CD14-positive monocyte (primary cell): ENCODE measurements at regions of chr4 and their contacts with region 1.

Region 1: GRCh38 chr4:2462218-2462991 is 6.5 kb upstream of the RNF4 start:
- DNase-seq: peak; percentile 39 to 61 (median 58)
- H3K4me3 ChIP-seq: peak overlapping the region in 2 of 3 experiments; percentile 6 to 71
- H3K4me3 Mint-ChIP-seq: peak overlapping the region; percentile 69 to 90
- H3K27ac ChIP-seq: no peak overlapping the region
- H3K27ac Mint-ChIP-seq: no peak overlapping the region
- H3K4me1 ChIP-seq: peaks cover 8 to 16% of the 10 kb centered on the region in 2 donors
- H3K4me1 Mint-ChIP-seq: peaks cover 17% of the 10 kb centered on the region
- H3K27me3 ChIP-seq: peaks cover 11 to 26% of the 10 kb centered on the region in 2 donors
- H3K27me3 Mint-ChIP-seq: peaks cover 36 to 45% (median 42%) of the 10 kb centered on the region in 3 donors
- CTCF ChIP-seq: peak; percentile 61

Region 2: DNA sequence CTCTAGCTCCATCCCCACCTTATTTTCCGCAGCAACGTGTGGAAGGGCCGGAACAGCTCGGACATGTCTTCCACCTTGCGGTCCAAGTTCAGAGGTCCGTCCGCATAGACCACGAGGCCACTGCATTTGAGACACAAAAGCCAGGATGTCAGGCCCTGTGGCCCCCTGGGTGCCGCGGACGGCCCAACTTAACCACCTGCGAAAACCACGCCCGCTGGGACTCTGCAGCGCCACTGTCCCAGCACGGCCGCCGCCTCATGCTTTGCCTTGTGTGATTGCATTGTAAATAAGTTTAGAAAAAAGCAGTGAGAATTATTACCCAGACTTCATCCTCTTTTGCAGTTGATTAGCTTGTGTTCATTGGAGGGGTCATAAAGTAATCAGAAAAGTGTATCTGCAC is 142.3 kb before region 1 on chr4:
- intact Hi-C with region 1: no loop called
- DNase-seq: no peak
- H3K4me3 ChIP-seq: no peak overlapping the region
- H3K4me3 Mint-ChIP-seq: no peak overlapping the region
- H3K27ac ChIP-seq: no peak overlapping the region
- H3K27ac Mint-ChIP-seq: no peak overlapping the region
- H3K4me1 ChIP-seq: no peaks in the 10 kb centered on the region
- H3K4me1 Mint-ChIP-seq: no peaks in the 10 kb centered on the region
- H3K27me3 ChIP-seq: no peaks in the 10 kb centered on the region
- H3K27me3 Mint-ChIP-seq: peaks cover 3 to 4% (median 3%) of the 10 kb centered on the region in 3 donors
- CTCF ChIP-seq: no peak

Region 3: DNA sequence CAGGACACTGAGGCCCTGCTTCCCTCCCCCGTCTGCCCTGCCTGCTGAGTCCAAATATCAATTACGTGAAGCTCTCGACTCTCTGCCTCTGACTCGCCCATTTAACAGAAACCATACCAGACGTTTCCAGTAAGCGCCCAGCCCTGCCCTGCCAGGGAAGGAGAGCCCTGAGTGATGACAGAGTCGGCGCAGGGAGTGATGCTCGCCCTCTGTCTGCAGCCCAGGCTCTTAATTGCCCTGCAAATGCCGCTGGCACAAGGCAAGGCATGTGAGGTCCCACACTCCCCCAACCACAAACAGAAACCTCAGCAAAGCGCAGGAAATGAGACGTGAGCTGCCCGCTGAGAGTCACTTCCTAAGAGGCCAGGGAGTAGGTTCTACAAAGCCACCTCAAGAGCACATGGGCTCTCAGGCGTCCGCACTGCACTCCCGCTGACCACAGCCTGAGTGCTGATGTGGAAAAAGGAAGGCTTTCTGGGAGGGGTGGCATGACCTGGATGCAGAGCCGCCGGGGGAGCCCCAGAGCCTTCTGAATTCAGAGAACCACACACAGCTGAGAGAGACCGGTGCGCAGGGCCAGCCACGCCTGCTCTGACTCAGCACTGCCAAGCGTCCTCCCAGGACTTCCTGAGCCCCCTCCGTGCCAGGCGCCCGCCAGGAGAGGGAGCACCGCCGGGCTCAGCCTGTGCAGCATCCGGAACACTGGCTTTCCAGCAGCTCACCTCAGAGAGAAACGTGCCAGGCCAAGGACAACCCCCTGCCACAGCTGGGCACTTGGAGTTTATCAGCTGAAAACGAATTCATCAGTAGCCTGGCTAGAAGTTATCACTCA is 49.3 kb before region 1 on chr4:
- intact Hi-C with region 1: no loop called
- DNase-seq: peak; percentile 94 to 98 (median 95)
- H3K4me3 ChIP-seq: peak overlapping the region; percentile 7 to 72 (median 24)
- H3K4me3 Mint-ChIP-seq: peak overlapping the region; percentile 75 to 89
- H3K27ac ChIP-seq: peak overlapping the region; percentile 66 to 87
- H3K27ac Mint-ChIP-seq: peak overlapping the region; percentile 91 to 98 (median 97)
- H3K4me1 ChIP-seq: peaks cover 46 to 53% of the 10 kb centered on the region in 2 donors
- H3K4me1 Mint-ChIP-seq: peaks cover 50% of the 10 kb centered on the region
- H3K27me3 ChIP-seq: peaks cover 16 to 29% of the 10 kb centered on the region in 2 donors
- H3K27me3 Mint-ChIP-seq: peaks cover 28 to 38% (median 34%) of the 10 kb centered on the region in 3 donors
- CTCF ChIP-seq: peak; percentile 53

Region 4: DNA sequence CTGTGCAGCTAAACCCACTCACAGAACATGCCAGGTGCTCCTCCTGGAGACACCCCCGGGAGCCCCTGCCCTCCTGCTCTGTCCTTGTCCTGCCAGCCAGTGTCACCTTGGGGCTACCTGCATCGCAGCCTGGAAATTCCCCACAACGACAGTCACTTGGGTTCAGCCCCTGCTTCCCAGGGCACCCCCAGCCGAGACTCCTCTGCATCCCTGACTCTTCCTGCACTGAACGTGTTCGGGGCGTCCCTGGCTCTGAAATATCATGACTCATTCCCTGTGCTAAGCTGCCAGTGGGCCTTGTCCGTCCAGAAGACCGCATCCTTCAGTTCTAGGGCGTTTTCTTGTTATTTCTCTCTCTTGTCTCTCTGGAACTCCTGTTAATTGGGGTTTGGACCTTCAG is 37.8 kb before region 1 on chr4:
- intact Hi-C with region 1: loop called in 1 of 2 experiments (anchors 5 kb)
- DNase-seq: no peak
- H3K4me3 ChIP-seq: no peak overlapping the region
- H3K4me3 Mint-ChIP-seq: no peak overlapping the region
- H3K27ac ChIP-seq: no peak overlapping the region
- H3K27ac Mint-ChIP-seq: no peak overlapping the region
- H3K4me1 ChIP-seq: peaks cover 8 to 9% of the 10 kb centered on the region in 2 donors
- H3K4me1 Mint-ChIP-seq: peaks cover 13% of the 10 kb centered on the region
- H3K27me3 ChIP-seq: peaks cover 0 to 7% of the 10 kb centered on the region in 2 donors
- H3K27me3 Mint-ChIP-seq: peaks cover 18 to 20% (median 19%) of the 10 kb centered on the region in 3 donors
- CTCF ChIP-seq: no peak

Region 5: GRCh38 chr4:2497931-2498330 is 35.5 kb after region 1 on chr4:
- intact Hi-C with region 1: loop called in 1 of 2 experiments (anchors 5 kb)
- DNase-seq: peak; percentile 82 to 86 (median 84)
- H3K4me3 ChIP-seq: peak overlapping the region in 1 of 3 experiments; percentile 44
- H3K4me3 Mint-ChIP-seq: peak overlapping the region; percentile 70 to 76
- H3K27ac ChIP-seq: peak overlapping the region; percentile 62 to 72
- H3K27ac Mint-ChIP-seq: peak overlapping the region; percentile 87 to 95 (median 94)
- H3K4me1 ChIP-seq: peaks cover 18 to 20% of the 10 kb centered on the region in 2 donors
- H3K4me1 Mint-ChIP-seq: peaks cover 29% of the 10 kb centered on the region
- H3K27me3 ChIP-seq: no peaks in the 10 kb centered on the region
- H3K27me3 Mint-ChIP-seq: peaks cover 0 to 5% (median 1%) of the 10 kb centered on the region in 3 donors
- CTCF ChIP-seq: no peak

Region 6: DNA sequence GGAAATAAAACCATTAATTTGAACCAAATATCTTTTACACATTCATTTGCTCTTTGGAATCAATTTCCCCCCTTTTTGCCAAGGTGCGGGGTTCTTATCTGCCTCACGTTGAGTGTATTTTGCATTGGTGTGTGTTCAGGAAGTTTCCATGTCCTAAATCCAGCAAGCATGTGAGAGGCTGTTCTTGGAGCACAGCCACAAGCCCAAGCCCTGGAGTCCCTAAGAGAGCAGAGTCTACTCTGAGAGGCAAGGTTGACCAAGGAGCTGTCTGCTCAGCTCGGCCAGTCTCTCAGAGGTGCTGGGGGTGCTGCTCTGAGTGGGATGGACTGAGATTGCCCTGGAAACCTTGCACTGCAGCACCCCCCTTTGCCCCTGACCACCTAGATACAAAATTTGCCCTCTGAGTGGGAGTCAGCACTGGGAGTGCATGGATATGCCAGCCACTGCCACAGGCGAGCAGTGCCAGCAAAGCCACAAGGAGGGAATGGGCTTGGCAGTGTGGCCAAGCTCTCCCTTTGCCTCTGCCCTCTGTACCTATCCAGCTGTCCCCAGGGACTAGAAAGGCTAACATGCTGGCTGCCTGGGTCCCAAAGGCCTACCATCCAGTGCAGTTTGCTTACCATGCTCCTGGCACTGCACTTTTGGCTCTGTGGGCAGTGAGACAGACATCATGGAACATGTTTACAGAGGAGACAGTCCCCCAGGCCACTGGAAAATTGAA is 53.6 kb after region 1 on chr4:
- intact Hi-C with region 1: no loop called
- DNase-seq: no peak
- H3K4me3 ChIP-seq: no peak overlapping the region
- H3K4me3 Mint-ChIP-seq: no peak overlapping the region
- H3K27ac ChIP-seq: peak overlapping the region in 1 of 2 donors; percentile 51
- H3K27ac Mint-ChIP-seq: peak overlapping the region in 6 of 7 donors; percentile 14 to 79 (median 44)
- H3K4me1 ChIP-seq: no peaks in the 10 kb centered on the region
- H3K4me1 Mint-ChIP-seq: no peaks in the 10 kb centered on the region
- H3K27me3 ChIP-seq: no peaks in the 10 kb centered on the region
- H3K27me3 Mint-ChIP-seq: no peaks in the 10 kb centered on the region
- CTCF ChIP-seq: no peak